Activated T-helper 1 cell treated with anti-CD3 and anti-CD28 coated beads, Interleukin-12 subunit alpha, Interleukin-12 subunit beta, Interleukin-2, Interleukin-4 antibody, amounts not matched to agents 30 ng/mL and 10 ng/mL and 1 ng/mL, durations not matched to agents 14 hours and 24 hours and 36 hours (primary cell): ENCODE measurements at regions of chr5 and their contacts with region 1.

Region 1: DNA sequence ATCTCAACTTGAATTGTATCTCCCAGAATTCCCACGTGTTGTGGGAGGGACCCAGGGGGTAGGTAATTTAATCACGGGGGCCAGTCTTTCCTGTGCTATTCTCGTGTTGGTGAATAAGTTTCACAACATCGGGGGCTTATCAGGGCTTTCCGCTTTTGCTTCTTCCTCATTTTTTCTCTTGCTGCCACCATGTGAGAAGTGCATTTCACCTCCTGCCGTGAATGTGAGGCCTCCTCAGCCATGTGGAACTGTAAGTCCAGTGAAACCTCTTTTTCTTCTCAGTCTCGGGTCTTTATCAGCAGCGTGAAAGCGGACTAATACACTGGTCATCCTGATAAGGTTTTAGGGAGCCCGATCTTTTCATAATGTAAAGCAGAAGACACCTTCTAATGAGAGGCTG is 687.0 kb upstream of the FTMT start:
- DNase-seq: no peak
- H3K4me3 Mint-ChIP-seq: no peak overlapping the region
- H3K27ac Mint-ChIP-seq: no peak overlapping the region
- H3K4me1 Mint-ChIP-seq: no peaks in the 10 kb centered on the region
- H3K27me3 Mint-ChIP-seq: no peaks in the 10 kb centered on the region

Region 2: GRCh38 chr5:121182788-121183490 is 18.3 kb after region 1 on chr5:
- intact Hi-C with region 1: loop called (anchors 2 kb)
- DNase-seq: no peak
- H3K4me3 Mint-ChIP-seq: no peak overlapping the region
- H3K27ac Mint-ChIP-seq: no peak overlapping the region
- H3K4me1 Mint-ChIP-seq: no peaks in the 10 kb centered on the region
- H3K27me3 Mint-ChIP-seq: no peaks in the 10 kb centered on the region